ENCODE measurements at regions of chr6 and their contacts with region 1.

Region 1: DNA sequence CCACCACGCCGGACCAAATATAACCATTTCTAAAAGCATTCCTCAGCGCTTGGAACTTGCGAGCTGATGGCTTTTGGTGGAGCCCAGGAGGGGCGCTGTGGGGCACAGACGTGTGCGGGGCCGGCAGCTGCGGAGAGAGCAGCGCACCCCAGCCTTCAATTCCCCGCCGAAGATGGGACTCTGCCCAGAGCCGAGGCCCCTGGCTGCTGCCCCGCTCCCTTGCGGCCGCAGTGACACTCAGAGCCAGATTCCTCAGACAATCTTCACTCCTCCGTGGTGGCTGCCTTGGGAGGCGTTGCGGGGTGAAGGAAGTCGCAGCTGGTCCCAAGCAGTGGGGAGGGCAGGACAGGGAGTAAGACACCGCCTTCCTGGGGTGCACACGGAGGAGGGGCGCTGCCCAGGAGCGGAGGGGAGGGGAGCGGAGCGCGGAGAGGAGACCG is 87.7 kb downstream of the TMEM242 start:
- DNase-seq: peak; percentile 78
- ATAC-seq: peak; percentile 93
- H3K4me3 Mint-ChIP-seq: peak overlapping the region; percentile 80
- H3K27ac Mint-ChIP-seq: peak overlapping the region; percentile 30
- H3K4me1 Mint-ChIP-seq: peaks cover 16% of the 10 kb centered on the region
- H3K27me3 Mint-ChIP-seq: peaks cover 29% of the 10 kb centered on the region

Region 2: GRCh38 chr6:157221007-157221816 is 14.4 kb before region 1 on chr6:
- CTCF ChIA-PET with region 1: interaction called, 27 read pairs
- POLR2A ChIA-PET with region 1: no interaction called
- intact Hi-C with region 1: no loop called
- DNase-seq: peak; percentile 93
- ATAC-seq: peak; percentile 92
- H3K4me3 Mint-ChIP-seq: peak overlapping the region; percentile 75
- H3K27ac Mint-ChIP-seq: peak overlapping the region; percentile 91
- H3K4me1 Mint-ChIP-seq: peaks cover 38% of the 10 kb centered on the region
- H3K27me3 Mint-ChIP-seq: no peaks in the 10 kb centered on the region

Measured in activated CD4-positive, alpha-beta T cell treated with anti-CD3 and anti-CD28 coated beads for 36 hours (primary cell).